Heart right ventricle (tissue), 16 donors: ENCODE measurements at regions of chr14 and their contacts with region 1.

Region 1: GRCh38 chr14:32738206-32738871 is 200.3 kb upstream of the NPAS3 start:
- DNase-seq: no peak
- ATAC-seq: no peak
- H3K4me3 ChIP-seq: no peak overlapping the region
- H3K27ac ChIP-seq: no peak overlapping the region
- H3K4me1 ChIP-seq: peaks cover 0 to 14% (median 0%) of the 10 kb centered on the region in 9 donors
- H3K27me3 ChIP-seq: no peaks in the 10 kb centered on the region
- CTCF ChIP-seq: no peak

Region 2: GRCh38 chr14:32761381-32761968 is 23.1 kb after region 1 on chr14:
- intact Hi-C with region 1: loop called in 1 of 10 experiments (anchors 1 kb)
- DNase-seq: no peak
- ATAC-seq: no peak
- H3K4me3 ChIP-seq: no peak overlapping the region
- H3K27ac ChIP-seq: no peak overlapping the region
- H3K4me1 ChIP-seq: peaks cover 0 to 23% (median 6%) of the 10 kb centered on the region in 9 donors
- H3K27me3 ChIP-seq: no peaks in the 10 kb centered on the region
- CTCF ChIP-seq: no peak